ENCODE measurements at regions of chr3 and their contacts with region 1.

Region 1: GRCh38 chr3:149009732-149010131 is 18.4 kb downstream of the GYG1 start:
- DNase-seq: peak; percentile 47
- ATAC-seq: peak; percentile 97
- H3K4me3 Mint-ChIP-seq: peak overlapping the region; percentile 54
- H3K27ac Mint-ChIP-seq: peak overlapping the region; percentile 93
- H3K4me1 Mint-ChIP-seq: peaks cover 27% of the 10 kb centered on the region
- H3K27me3 Mint-ChIP-seq: no peaks in the 10 kb centered on the region

Region 2: GRCh38 chr3:148991194-148992026 is 18.3 kb before region 1 on chr3 and contains the start of gene GYG1:
- POLR2A ChIA-PET with region 1: interaction called, 18 read pairs
- DNase-seq: peak; percentile 81
- ATAC-seq: peak; percentile 88
- H3K4me3 Mint-ChIP-seq: peak within 1 kb of the TSS; percentile 83
- H3K27ac Mint-ChIP-seq: peak within 1 kb of the TSS; percentile 75
- H3K4me1 Mint-ChIP-seq: peaks cover 27% of the 10 kb centered on the region
- H3K27me3 Mint-ChIP-seq: no peaks in the 10 kb centered on the region
- total RNA-seq, gene GYG1: 48.6 to 49.3 TPM

Region 3: DNA sequence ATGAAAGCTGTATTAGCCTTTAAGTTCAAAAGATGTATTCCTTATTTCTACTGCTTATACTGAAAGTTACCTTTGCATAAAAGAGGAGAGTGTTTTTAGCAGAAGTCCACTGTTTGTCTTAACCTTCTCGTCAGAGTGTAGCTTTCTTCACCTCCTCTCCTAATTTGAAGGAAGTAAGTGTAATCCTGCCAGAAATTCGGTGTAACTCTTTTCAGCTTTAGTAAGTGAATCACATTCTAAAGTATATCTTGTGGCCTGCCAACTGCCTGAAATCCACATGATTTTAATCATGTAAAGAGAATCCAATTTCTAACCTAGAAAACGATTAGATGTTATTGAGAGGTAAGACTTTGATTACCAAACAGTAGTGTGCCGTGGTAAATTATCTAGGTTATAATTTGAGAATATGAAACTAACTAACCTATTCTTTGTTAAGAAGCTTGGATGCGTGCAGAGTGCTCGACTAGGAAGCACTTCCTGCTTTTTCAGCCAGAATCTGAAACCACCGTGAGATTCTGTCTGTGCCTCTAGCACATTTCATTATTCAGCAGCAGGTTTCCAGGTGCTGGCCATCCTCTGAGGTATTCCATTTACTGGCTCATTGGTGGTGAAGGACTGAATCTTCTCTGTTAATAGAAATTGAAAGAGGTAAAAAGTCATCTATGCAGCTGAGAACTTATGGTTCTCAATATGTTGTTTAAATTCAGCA is 10.9 kb before region 1 on chr3:
- POLR2A ChIA-PET with region 1: interaction called, 12 read pairs
- DNase-seq: no peak
- ATAC-seq: peak; percentile 90
- H3K4me3 Mint-ChIP-seq: peak overlapping the region; percentile 66
- H3K27ac Mint-ChIP-seq: peak overlapping the region; percentile 84
- H3K4me1 Mint-ChIP-seq: peaks cover 34% of the 10 kb centered on the region
- H3K27me3 Mint-ChIP-seq: no peaks in the 10 kb centered on the region

Region 4: DNA sequence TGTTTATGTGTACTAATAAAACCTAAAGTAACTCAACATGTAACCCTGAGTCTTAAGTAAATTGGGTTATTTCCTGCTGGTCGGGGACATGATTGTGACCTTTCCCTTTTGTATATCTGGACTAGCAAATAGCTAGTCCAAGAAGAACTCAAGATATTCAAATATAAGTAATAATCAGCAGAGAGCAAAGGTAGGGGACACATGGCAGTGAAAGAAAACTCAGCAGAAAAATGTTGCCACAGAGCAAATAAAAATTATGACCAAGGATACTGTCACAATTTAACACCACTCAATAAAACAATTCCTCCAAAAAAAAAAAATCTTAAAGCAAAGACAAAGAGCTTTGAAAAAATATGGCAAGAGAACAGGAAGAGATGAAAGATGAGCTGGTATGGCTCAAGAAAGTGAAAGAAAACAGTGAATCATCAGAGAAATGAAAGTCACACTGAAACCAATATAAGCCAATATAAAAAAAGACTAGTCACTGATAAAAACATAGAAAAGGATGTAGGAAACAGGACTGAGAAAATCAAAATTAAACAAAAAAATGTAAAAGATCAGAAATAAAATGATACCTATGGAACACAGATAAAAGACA is 33.2 kb after region 1 on chr3:
- POLR2A ChIA-PET with region 1: interaction called, 11 read pairs
- DNase-seq: no peak
- ATAC-seq: peak; percentile 83
- H3K4me3 Mint-ChIP-seq: peak overlapping the region; percentile 78
- H3K27ac Mint-ChIP-seq: peak overlapping the region; percentile 88
- H3K4me1 Mint-ChIP-seq: peaks cover 18% of the 10 kb centered on the region
- H3K27me3 Mint-ChIP-seq: no peaks in the 10 kb centered on the region

Region 5: GRCh38 chr3:149122721-149123578 is 113.2 kb after region 1 on chr3:
- POLR2A ChIA-PET with region 1: no interaction called
- DNase-seq: no peak
- ATAC-seq: no peak
- H3K4me3 Mint-ChIP-seq: no peak overlapping the region
- H3K27ac Mint-ChIP-seq: no peak overlapping the region
- H3K4me1 Mint-ChIP-seq: peaks cover 5% of the 10 kb centered on the region
- H3K27me3 Mint-ChIP-seq: peaks cover 4% of the 10 kb centered on the region

Region 6: DNA sequence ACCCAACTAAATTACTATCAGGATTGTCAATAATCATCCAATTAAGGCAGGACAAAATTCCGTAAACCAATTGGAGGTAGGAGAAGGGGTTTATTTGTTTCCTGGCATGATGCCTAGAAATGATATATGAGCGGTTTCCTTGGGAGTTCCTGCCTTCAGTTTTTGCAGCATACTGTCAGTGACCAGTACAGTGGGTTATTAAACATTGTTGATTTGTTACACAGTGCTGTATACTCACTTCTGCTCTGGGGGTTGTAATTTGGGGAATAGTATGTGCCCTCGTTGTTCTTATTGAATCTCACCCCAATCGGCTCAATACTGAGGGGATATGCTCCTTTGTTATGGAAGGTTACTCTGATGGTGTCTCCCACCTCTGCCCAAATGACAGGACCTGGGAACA is 189.7 kb after region 1 on chr3:
- POLR2A ChIA-PET with region 1: no interaction called
- DNase-seq: no peak
- ATAC-seq: no peak
- H3K4me3 Mint-ChIP-seq: no peak overlapping the region
- H3K27ac Mint-ChIP-seq: no peak overlapping the region
- H3K4me1 Mint-ChIP-seq: peaks cover 11% of the 10 kb centered on the region
- H3K27me3 Mint-ChIP-seq: peaks cover 37% of the 10 kb centered on the region